ENCODE measurements at regions of chr11 and their contacts with region 1.

Region 1: GRCh38 chr11:14413307-14414069 is 54.5 kb upstream of the RRAS2 start:
- DNase-seq: peak; percentile 55
- H3K4me3 ChIP-seq: no peak overlapping the region
- H3K27me3 ChIP-seq: no peaks in the 10 kb centered on the region
- CTCF ChIP-seq: peak; percentile 47

Region 2: DNA sequence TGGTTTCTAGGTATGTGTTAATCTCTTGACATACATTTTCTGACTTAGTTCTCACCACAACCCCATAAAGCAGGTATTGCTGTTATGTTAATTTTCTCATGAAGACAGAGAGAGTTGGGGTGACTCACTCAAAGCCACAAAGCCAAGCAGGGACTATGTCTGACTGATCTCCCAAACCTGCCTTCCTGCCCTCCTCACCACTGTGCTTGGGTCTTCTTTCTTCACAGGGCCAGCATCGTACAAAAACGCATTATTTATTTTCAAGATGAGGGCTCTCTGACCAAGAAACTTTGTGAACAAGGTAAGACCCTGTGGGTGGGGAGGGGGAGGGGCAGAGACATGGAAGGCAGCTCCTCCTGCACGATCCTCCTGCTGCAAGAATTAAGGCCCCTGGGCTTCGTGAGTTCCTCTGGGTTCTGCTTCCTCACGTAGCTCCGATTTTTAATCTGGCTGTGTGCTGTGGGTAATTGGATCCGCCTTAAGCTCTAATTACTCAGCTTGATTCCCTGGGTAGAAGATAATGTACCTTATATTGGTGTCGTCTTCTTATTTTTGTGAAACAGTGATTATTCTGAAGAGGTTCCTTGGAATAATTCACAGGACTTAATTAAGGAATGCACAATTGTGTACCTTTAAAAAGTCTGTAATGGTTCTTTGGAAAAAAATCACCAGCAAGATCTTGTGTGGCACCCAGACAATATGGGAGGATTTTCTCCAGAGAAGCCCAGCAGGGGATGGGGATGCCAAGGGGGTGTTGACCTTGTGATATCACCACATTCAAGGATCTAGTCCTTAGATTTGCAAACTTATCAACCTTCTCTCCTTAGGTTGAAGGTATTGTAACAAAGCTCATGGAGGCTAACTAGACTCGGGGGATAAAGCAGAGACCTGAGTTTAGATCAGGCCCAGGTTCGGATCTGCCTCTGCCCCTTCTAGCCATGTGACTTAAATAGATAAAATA is 338.1 kb before region 1 on chr11:
- CTCF ChIA-PET with region 1: no interaction called
- POLR2A ChIA-PET with region 1: interaction called, 11 read pairs
- DNase-seq: no peak
- H3K4me3 ChIP-seq: no peak overlapping the region
- H3K27me3 ChIP-seq: no peaks in the 10 kb centered on the region
- CTCF ChIP-seq: no peak

Region 3: GRCh38 chr11:14358729-14359439 is 54.6 kb before region 1 on chr11 and contains the start of gene RRAS2:
- CTCF ChIA-PET with region 1: interaction called, 7 read pairs
- POLR2A ChIA-PET with region 1: interaction called, 11 read pairs
- DNase-seq: no peak
- H3K4me3 ChIP-seq: peak within 1 kb of the TSS; percentile 81
- H3K27me3 ChIP-seq: no peaks in the 10 kb centered on the region
- CTCF ChIP-seq: no peak
- polyA plus RNA-seq, gene RRAS2: 29.1 and 60.6 TPM in 2 replicates

Region 4: DNA sequence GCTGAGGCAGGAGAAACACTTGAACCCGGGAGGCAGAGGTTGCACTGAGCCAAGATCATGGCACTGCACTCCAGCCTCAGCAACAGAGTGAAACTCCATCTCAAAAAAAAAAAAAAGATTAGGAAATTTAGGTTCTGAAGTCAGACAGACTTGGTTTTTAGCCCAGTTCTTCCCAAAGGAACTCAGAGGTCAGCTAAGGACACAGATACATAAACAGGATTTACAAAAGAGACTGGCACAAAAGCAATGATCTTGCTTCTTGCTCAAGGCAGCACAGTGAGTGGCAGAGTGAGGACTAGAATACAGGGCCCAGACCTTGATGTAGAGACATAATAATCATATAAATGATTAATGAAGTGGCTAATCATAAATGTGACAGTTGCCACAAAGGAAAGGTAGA is 29.1 kb before region 1 on chr11:
- CTCF ChIA-PET with region 1: interaction called, 10 read pairs
- POLR2A ChIA-PET with region 1: no interaction called
- DNase-seq: no peak
- H3K4me3 ChIP-seq: no peak overlapping the region
- H3K27me3 ChIP-seq: no peaks in the 10 kb centered on the region
- CTCF ChIP-seq: no peak

Measured in BJ (cell line).